Activated B cell treated with CpG ODN at 0.5 μM for 24 hours (primary cell): ENCODE measurements at regions of chr14 and their contacts with region 1.

Region 1: DNA sequence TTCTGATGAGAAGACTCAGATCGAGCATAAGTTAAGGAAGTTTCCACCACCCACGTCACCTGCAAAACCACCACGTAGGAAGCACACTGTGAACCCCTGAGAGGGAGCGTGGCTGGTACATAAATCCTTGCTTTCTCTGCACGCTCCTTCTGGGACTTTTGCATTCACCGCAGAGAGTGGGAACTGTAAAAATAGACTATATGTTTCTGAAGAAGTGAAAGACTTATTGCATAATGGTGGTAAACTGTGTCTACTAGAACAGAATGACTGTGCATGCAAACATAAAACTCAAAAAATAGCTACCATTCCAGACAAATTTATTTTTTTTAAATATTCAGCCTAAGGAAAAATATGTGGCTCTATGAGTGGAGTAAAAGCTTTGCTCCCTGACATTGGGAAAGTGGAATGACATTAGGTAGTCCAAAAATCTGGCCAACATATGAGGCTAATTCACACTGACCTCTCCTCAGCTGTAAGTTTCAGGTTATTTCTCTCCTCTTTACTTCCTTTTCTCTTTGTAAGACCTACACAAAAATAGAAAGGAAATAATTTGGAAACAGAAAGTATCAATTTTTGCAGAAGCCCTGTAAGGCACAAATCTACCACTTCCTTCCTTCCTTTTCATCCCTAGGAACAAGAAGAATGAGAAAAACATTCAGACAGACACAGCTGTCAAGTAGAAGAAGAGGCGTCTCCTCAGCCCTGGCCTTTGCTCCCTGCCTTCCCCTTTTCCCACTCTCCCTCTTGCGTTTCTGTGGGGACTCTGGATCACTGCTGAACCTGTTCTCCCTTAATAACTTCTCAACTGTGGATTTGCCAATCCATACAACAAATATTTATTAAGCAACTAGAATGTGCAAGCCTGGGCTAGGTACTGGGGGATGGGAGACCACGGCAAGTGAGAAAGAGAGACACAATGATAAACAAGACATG is 264.3 kb upstream of the FOXN3 start:
- DNase-seq: no peak
- ATAC-seq: peak; percentile 84
- H3K4me3 Mint-ChIP-seq: peak overlapping the region; percentile 67
- H3K27ac Mint-ChIP-seq: peak overlapping the region; percentile 80
- H3K4me1 Mint-ChIP-seq: peaks cover 30% of the 10 kb centered on the region
- H3K27me3 Mint-ChIP-seq: no peaks in the 10 kb centered on the region
- CTCF ChIP-seq: no peak

Region 2: DNA sequence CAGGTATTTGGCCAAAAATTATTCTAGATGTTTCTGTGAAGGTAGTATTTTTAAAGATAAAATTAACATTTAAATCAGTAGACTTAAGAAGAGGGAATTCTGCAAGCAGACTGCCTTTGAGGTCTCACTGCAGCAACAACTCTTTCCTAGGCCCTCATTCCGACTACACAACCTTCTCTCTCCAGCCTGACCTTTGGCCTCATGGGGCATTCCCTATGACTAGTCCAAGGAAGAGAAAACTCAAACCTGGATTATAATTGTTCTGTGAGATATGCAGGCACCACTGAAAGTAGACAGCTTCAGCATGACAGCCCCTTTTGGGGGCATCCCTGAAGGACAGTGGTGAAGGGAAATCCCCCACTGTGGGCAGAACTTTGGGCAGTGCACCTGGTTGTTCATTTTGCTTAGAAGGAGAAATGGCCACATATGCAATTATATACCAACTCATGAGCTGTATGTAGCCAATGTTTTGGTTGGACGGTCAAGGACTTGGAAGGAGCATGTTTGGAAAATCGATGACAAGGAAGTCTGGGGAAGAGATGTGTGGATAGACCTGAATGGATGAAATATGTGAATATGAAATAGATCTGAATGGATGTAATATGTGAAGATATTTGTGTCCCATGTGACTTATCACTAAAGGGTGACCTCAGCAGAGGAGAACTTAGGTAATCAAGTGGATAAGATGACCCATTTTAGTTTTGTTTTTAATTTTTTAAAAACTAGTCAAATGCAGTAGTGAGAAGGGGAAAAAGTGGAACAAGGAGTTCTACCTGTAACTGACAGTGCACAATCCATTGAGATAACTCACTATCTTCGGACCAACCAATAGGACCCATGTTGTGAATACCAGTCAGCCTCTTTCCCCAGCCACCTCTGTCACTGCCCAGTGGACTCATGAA is 31.0 kb before region 1 on chr14:
- CTCF ChIA-PET with region 1: no interaction called
- POLR2A ChIA-PET with region 1: no interaction called
- intact Hi-C with region 1: loop called (anchors 2 kb)
- DNase-seq: no peak
- ATAC-seq: peak; percentile 60
- H3K4me3 Mint-ChIP-seq: peak overlapping the region; percentile 3
- H3K27ac Mint-ChIP-seq: peak overlapping the region; percentile 37
- H3K4me1 Mint-ChIP-seq: peaks cover 22% of the 10 kb centered on the region
- H3K27me3 Mint-ChIP-seq: no peaks in the 10 kb centered on the region
- CTCF ChIP-seq: no peak

Region 3: GRCh38 chr14:89720741-89721315 is 39.5 kb after region 1 on chr14:
- CTCF ChIA-PET with region 1: no interaction called
- POLR2A ChIA-PET with region 1: interaction called, 7 read pairs
- intact Hi-C with region 1: loop called (anchors 2 kb)
- DNase-seq: peak; percentile 45
- ATAC-seq: peak; percentile 90
- H3K4me3 Mint-ChIP-seq: peak overlapping the region; percentile 69
- H3K27ac Mint-ChIP-seq: peak overlapping the region; percentile 95
- H3K4me1 Mint-ChIP-seq: peaks cover 66% of the 10 kb centered on the region
- H3K27me3 Mint-ChIP-seq: no peaks in the 10 kb centered on the region
- CTCF ChIP-seq: no peak

Region 4: DNA sequence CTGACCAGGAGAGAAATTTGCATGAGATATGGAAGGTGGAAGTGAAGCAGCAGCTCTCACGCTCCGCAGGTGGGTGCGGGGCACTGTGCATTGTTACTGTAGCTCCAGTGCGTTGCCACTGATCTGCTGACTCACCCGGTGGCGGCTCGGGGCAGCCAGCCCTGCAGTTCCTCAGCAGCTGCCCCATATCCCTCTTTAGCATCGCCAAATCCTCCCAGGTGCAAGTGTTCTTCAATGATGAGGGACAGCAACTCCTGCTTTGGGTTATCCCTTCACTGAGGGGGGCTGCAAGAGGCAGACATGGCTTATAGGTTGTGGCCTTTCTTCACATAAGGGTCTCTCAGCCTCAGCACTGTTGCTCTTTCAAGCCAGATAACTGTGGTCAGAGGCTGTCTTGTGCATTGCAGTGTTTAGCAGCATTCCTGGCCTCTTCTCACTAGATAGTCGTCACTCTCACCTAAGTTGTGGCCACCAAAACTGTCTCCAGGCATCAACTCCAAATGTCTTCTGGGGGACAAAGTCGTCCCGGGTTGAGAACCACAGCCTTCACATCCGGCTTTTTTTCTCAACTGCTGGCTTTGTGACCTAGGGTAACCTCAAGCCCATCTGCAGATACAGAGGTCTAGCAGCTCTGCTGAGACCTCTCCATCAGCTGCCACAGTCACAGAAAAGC is 92.4 kb after region 1 on chr14:
- CTCF ChIA-PET with region 1: no interaction called
- POLR2A ChIA-PET with region 1: no interaction called
- intact Hi-C with region 1: no loop called
- DNase-seq: peak; percentile 35
- ATAC-seq: peak; percentile 93
- H3K4me3 Mint-ChIP-seq: peak overlapping the region; percentile 45
- H3K27ac Mint-ChIP-seq: no peak overlapping the region
- H3K4me1 Mint-ChIP-seq: peaks cover 26% of the 10 kb centered on the region
- H3K27me3 Mint-ChIP-seq: peaks cover 1% of the 10 kb centered on the region
- CTCF ChIP-seq: no peak